Activated naive CD4-positive, alpha-beta T cell treated with anti-CD3 and anti-CD28 coated beads for 36 hours (primary cell): ENCODE measurements at regions of chr10 and their contacts with region 1.

Region 1: DNA sequence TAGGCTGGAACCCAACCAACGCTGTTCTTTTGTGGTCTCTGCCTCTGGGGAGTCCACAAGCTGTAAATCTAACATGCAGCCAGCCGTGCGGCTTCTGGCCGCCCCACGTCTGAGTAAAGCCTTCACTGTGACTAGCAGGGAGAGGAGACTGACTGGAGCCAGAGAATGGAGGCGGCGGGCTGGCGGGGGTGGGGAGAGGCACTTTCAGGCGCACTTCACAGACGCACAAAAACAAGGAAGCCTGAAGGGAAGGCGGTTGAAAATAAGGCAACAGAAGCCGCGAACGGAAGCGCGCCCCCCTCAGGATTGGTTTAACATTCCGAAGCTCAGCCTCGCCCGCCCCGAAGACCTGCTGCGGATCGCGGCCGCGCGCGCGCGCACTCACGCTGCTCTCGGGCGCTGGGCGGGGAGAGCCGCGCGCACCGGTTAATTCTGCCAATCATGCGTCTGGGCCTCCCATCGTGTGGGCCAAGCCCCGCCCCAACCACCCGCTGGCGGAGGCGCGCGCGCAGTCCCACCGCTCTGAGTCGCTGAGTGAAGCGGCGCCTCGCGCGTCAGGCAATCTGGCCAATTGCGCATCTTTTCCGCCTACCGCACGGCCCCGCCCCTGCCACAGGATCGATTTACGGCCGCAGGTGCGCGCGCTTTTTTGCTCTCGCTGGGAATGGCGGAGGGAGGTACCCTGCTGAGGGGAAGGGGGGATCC is at the start of gene SFR1:
- DNase-seq: peak; percentile 99
- H3K4me3 Mint-ChIP-seq: peak within 1 kb of the TSS; percentile 90
- H3K27ac Mint-ChIP-seq: peak within 1 kb of the TSS; percentile 97
- H3K4me1 Mint-ChIP-seq: peaks cover 38% of the 10 kb centered on the region
- H3K27me3 Mint-ChIP-seq: no peaks in the 10 kb centered on the region
- total RNA-seq, gene SFR1: 17.0 to 18.5 TPM

Region 2: DNA sequence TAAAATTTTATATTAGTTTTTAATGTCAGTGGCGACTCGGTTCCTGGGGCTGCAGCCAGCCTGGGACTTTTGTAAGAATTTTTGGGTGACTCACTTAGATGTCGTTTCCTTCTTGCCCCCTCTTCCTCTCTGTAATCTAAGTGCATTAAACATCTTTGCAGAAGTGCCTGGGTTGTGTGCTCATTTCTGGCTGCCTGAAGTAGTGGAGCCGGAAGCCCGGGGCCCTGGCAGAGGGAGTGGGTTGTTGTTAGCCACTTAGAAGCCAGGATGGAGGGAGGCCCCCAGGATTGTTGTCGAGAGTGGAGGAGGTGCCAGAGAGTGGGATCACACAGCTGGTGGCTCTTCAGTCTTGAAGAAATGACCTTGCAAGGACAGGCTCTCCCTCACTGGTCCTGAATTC is 1488.4 kb before region 1 on chr10:
- CTCF ChIA-PET with region 1: no interaction called
- intact Hi-C with region 1: no loop called
- DNase-seq: peak; percentile 80
- H3K4me3 Mint-ChIP-seq: no peak overlapping the region
- H3K27ac Mint-ChIP-seq: peak overlapping the region; percentile 84
- H3K4me1 Mint-ChIP-seq: peaks cover 41% of the 10 kb centered on the region
- H3K27me3 Mint-ChIP-seq: no peaks in the 10 kb centered on the region

Region 3: GRCh38 chr10:103192451-103193106 is 929.1 kb before region 1 on chr10:
- CTCF ChIA-PET with region 1: no interaction called
- intact Hi-C with region 1: loop called (anchors 5 kb)
- DNase-seq: peak; percentile 78
- H3K4me3 Mint-ChIP-seq: peak overlapping the region; percentile 87
- H3K27ac Mint-ChIP-seq: peak overlapping the region; percentile 96
- H3K4me1 Mint-ChIP-seq: peaks cover 39% of the 10 kb centered on the region
- H3K27me3 Mint-ChIP-seq: no peaks in the 10 kb centered on the region

Region 4: DNA sequence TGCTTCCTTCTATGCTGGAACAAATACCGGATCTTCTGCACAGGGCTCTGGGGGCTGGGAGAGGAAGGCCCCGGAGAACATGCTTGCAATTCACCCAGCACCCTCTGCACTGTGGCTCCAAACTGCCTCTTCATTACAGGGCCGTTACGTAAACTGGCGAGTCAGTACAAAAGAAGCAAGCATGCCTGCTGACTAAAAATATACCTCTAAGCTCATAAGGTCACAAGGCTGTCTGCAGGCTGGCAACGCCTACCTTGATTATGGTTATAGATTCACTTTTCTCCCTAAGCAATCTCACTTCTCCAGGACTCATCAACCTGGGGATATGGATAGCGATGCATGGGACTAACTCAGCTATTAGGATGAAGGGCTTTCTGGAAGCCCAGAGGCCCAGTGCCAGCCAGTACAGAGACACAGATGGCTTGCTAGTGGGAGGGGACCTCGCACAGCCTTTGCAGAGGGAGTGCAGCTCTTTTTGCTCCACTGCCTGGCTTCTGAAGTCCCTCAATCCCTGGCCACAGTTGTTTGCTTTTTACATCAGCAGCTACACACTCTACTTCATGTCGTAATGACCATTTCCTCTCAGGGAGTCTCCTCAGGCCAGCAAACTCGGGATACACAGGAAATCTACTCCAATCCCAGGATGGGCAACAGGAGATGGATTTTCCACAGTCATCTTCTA is 362.4 kb before region 1 on chr10:
- CTCF ChIA-PET with region 1: no interaction called
- intact Hi-C with region 1: no loop called
- DNase-seq: peak; percentile 72
- H3K4me3 Mint-ChIP-seq: no peak overlapping the region
- H3K27ac Mint-ChIP-seq: peak overlapping the region; percentile 32
- H3K4me1 Mint-ChIP-seq: peaks cover 39% of the 10 kb centered on the region
- H3K27me3 Mint-ChIP-seq: no peaks in the 10 kb centered on the region

Region 5: GRCh38 chr10:103888113-103888841 is 233.4 kb before region 1 on chr10:
- CTCF ChIA-PET with region 1: interaction called, 29 read pairs
- intact Hi-C with region 1: loop called (anchors 1 kb)
- DNase-seq: no peak
- H3K4me3 Mint-ChIP-seq: no peak overlapping the region
- H3K27ac Mint-ChIP-seq: peak overlapping the region; percentile 73
- H3K4me1 Mint-ChIP-seq: peaks cover 23% of the 10 kb centered on the region
- H3K27me3 Mint-ChIP-seq: no peaks in the 10 kb centered on the region

Region 6: GRCh38 chr10:103966671-103967447 is 154.8 kb before region 1 on chr10 and contains the start of gene SLK:
- CTCF ChIA-PET with region 1: interaction called, 3 read pairs
- intact Hi-C with region 1: loop called (anchors 1 kb)
- DNase-seq: peak; percentile 76
- H3K4me3 Mint-ChIP-seq: peak within 1 kb of the TSS; percentile 99
- H3K27ac Mint-ChIP-seq: peak within 1 kb of the TSS; percentile 92
- H3K4me1 Mint-ChIP-seq: peaks cover 26% of the 10 kb centered on the region
- H3K27me3 Mint-ChIP-seq: no peaks in the 10 kb centered on the region
- total RNA-seq, gene SLK: 16.0 to 16.1 TPM

Region 7: GRCh38 chr10:104056619-104057273 is 64.9 kb before region 1 on chr10:
- CTCF ChIA-PET with region 1: interaction called, 3 read pairs
- intact Hi-C with region 1: loop called (anchors 2 kb)
- DNase-seq: no peak
- H3K4me3 Mint-ChIP-seq: no peak overlapping the region
- H3K27ac Mint-ChIP-seq: no peak overlapping the region
- H3K4me1 Mint-ChIP-seq: no peaks in the 10 kb centered on the region
- H3K27me3 Mint-ChIP-seq: no peaks in the 10 kb centered on the region

Region 8: GRCh38 chr10:104197364-104197763 is 75.7 kb after region 1 on chr10:
- CTCF ChIA-PET with region 1: no interaction called
- intact Hi-C with region 1: no loop called
- DNase-seq: no peak
- H3K4me3 Mint-ChIP-seq: no peak overlapping the region
- H3K27ac Mint-ChIP-seq: no peak overlapping the region
- H3K4me1 Mint-ChIP-seq: no peaks in the 10 kb centered on the region
- H3K27me3 Mint-ChIP-seq: peaks cover 2% of the 10 kb centered on the region

Region 9: GRCh38 chr10:104231784-104232612 is 110.3 kb after region 1 on chr10 and contains the start of gene CFAP43:
- CTCF ChIA-PET with region 1: no interaction called
- intact Hi-C with region 1: loop called (anchors 1 kb)
- DNase-seq: peak; percentile 99
- H3K4me3 Mint-ChIP-seq: peak within 1 kb of the TSS; percentile 87
- H3K27ac Mint-ChIP-seq: peak within 1 kb of the TSS; percentile 50
- H3K4me1 Mint-ChIP-seq: peaks cover 6% of the 10 kb centered on the region
- H3K27me3 Mint-ChIP-seq: peaks cover 8% of the 10 kb centered on the region
- total RNA-seq, gene CFAP43: not detected

Region 10: GRCh38 chr10:104328896-104329710 is 207.4 kb after region 1 on chr10:
- CTCF ChIA-PET with region 1: no interaction called
- intact Hi-C with region 1: loop called (anchors 1 kb)
- DNase-seq: peak; percentile 94
- H3K4me3 Mint-ChIP-seq: peak overlapping the region; percentile 72
- H3K27ac Mint-ChIP-seq: peak overlapping the region; percentile 96
- H3K4me1 Mint-ChIP-seq: peaks cover 98% of the 10 kb centered on the region
- H3K27me3 Mint-ChIP-seq: no peaks in the 10 kb centered on the region

Region 11: GRCh38 chr10:104509981-104510380 is 388.3 kb after region 1 on chr10:
- CTCF ChIA-PET with region 1: no interaction called
- intact Hi-C with region 1: no loop called
- DNase-seq: no peak
- H3K4me3 Mint-ChIP-seq: no peak overlapping the region
- H3K27ac Mint-ChIP-seq: no peak overlapping the region
- H3K4me1 Mint-ChIP-seq: no peaks in the 10 kb centered on the region
- H3K27me3 Mint-ChIP-seq: peaks cover 3% of the 10 kb centered on the region